Activated CD4-positive, alpha-beta memory T cell treated with anti-CD3 and anti-CD28 coated beads for 36 hours (primary cell): ENCODE measurements at regions of chr11 and their contacts with region 1.

Region 1: DNA sequence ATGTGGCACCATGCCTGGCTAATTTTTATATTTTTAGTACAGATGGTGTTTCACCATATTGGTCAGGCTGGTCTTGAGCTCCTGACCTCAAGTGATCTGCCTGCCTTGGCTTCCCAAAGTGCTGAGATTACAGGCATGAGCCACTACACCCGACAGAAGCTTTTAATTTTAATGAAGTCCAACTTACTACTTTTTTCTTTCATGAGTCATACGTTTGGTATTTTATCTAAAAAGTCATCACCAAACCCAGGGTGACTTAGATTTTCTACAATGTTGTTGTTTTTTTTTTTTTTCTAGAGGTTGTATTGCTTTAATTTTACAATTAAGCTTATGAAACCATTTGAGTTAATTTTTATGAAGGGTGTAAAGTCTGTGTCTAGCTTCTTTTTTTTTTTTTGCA is 34.9 kb downstream of the JRKL start:
- DNase-seq: no peak
- H3K4me3 Mint-ChIP-seq: no peak overlapping the region
- H3K27ac Mint-ChIP-seq: no peak overlapping the region
- H3K4me1 Mint-ChIP-seq: peaks cover 8% of the 10 kb centered on the region
- H3K27me3 Mint-ChIP-seq: peaks cover 26% of the 10 kb centered on the region

Region 2: DNA sequence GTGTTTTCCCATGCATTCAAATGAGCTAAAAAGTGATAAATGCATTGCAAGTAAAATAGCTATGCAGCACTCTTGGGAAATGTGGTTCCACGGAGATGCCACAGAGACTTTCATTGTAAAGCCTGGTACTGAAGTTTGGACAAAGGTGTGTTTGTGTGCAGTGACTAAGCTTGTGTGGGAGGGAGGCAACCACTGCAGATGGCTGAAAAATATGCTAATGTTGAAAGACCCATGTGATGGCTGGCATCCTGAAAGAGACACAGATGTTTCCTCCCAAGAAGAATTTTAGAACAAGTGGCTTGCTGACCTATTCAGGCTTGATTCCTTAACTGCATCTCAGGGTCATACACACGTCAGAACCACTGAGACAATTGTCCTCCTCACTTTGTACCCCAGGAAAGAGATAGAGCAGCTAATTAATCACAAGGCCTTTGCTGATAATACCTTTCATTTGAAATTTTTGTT is 708.9 kb before region 1 on chr11:
- CTCF ChIA-PET with region 1: no interaction called
- POLR2A ChIA-PET with region 1: no interaction called
- intact Hi-C with region 1: loop called (anchors 5 kb)
- DNase-seq: peak; percentile 71
- H3K4me3 Mint-ChIP-seq: no peak overlapping the region
- H3K27ac Mint-ChIP-seq: peak overlapping the region; percentile 43
- H3K4me1 Mint-ChIP-seq: peaks cover 59% of the 10 kb centered on the region
- H3K27me3 Mint-ChIP-seq: no peaks in the 10 kb centered on the region

Region 3: DNA sequence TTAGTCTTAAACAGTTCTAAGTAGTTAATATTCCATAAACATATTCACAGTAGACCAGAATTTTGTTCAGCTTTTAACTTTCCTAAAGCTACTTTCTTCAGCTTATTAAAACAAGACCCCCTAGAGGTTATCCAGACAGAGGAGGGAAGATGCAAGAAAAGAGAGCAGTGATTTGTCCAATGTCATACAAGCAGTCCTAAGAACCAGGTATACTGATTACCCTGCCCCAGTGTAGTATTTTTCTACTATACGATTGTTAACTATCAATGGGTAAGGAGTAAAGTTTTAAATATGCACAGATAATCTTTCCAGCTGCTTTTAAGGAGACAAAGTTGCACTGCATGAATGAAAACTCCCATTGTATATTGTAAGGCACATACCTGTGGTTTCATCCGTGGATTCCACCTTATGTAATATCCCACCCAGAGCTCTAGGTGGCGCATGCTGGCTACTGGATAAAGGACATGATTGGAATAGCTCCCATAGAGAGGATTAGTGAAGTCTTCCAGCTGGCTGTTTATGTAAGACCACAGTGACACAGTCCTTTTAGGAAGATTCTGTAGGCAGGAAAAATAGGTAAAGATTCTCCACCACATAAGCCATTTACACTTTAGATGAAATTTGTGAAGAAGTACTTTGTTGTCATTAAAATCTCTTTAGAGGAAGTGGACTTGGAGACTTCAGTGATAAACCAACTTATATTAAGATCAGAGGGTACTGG is 588.8 kb before region 1 on chr11:
- CTCF ChIA-PET with region 1: interaction called, 27 read pairs
- POLR2A ChIA-PET with region 1: no interaction called
- intact Hi-C with region 1: loop called (anchors 1 kb)
- DNase-seq: peak; percentile 63
- H3K4me3 Mint-ChIP-seq: no peak overlapping the region
- H3K27ac Mint-ChIP-seq: no peak overlapping the region
- H3K4me1 Mint-ChIP-seq: peaks cover 3% of the 10 kb centered on the region
- H3K27me3 Mint-ChIP-seq: no peaks in the 10 kb centered on the region

Region 4: GRCh38 chr11:95849087-95849825 is 575.4 kb before region 1 on chr11:
- CTCF ChIA-PET with region 1: interaction called, 6 read pairs
- POLR2A ChIA-PET with region 1: no interaction called
- intact Hi-C with region 1: loop called (anchors 1 kb)
- DNase-seq: peak; percentile 39
- H3K4me3 Mint-ChIP-seq: no peak overlapping the region
- H3K27ac Mint-ChIP-seq: no peak overlapping the region
- H3K4me1 Mint-ChIP-seq: no peaks in the 10 kb centered on the region
- H3K27me3 Mint-ChIP-seq: no peaks in the 10 kb centered on the region